PC-9 (cell line): ENCODE measurements at regions of chr10 and their contacts with region 1.

Region 1: DNA sequence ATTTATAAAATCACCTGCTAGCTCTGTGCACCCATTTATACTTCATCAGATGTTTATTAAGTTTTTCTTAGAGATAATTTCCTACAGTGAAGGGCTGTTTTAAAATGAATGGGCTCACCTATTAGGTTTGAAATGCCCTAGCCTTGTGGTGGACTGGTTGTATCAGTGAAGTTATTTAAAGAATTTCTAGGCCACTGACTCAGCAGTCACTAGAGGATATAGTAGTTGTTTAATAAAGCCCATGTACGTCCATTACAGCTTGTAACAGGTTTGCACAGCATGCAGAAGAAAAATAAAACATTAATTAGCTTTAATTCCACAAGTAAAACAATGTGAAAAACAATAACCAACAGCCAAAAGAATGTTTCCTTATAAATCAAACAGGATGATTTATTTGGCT is 128.0 kb downstream of the RSU1 start:
- DNase-seq: no peak
- H3K4me3 ChIP-seq: no peak overlapping the region
- H3K27ac ChIP-seq: no peak overlapping the region
- H3K4me1 ChIP-seq: no peaks in the 10 kb centered on the region
- H3K27me3 ChIP-seq: no peaks in the 10 kb centered on the region
- CTCF ChIP-seq: no peak

Region 2: GRCh38 chr10:16341637-16342036 is 347.6 kb before region 1 on chr10:
- CTCF ChIA-PET with region 1: no interaction called
- POLR2A ChIA-PET with region 1: no interaction called
- intact Hi-C with region 1: no loop called
- DNase-seq: no peak
- H3K4me3 ChIP-seq: no peak overlapping the region
- H3K27ac ChIP-seq: no peak overlapping the region
- H3K4me1 ChIP-seq: no peaks in the 10 kb centered on the region
- H3K27me3 ChIP-seq: no peaks in the 10 kb centered on the region
- CTCF ChIP-seq: no peak

Region 3: GRCh38 chr10:16629981-16630380 is 59.2 kb before region 1 on chr10:
- CTCF ChIA-PET with region 1: interaction called, 14 read pairs
- POLR2A ChIA-PET with region 1: no interaction called
- intact Hi-C with region 1: no loop called
- DNase-seq: no peak
- H3K4me3 ChIP-seq: no peak overlapping the region
- H3K27ac ChIP-seq: no peak overlapping the region
- H3K4me1 ChIP-seq: no peaks in the 10 kb centered on the region
- H3K27me3 ChIP-seq: no peaks in the 10 kb centered on the region
- CTCF ChIP-seq: no peak